CD4-positive, alpha-beta memory T cell (primary cell): ENCODE measurements at regions of chr10 and their contacts with region 1.

Region 1: DNA sequence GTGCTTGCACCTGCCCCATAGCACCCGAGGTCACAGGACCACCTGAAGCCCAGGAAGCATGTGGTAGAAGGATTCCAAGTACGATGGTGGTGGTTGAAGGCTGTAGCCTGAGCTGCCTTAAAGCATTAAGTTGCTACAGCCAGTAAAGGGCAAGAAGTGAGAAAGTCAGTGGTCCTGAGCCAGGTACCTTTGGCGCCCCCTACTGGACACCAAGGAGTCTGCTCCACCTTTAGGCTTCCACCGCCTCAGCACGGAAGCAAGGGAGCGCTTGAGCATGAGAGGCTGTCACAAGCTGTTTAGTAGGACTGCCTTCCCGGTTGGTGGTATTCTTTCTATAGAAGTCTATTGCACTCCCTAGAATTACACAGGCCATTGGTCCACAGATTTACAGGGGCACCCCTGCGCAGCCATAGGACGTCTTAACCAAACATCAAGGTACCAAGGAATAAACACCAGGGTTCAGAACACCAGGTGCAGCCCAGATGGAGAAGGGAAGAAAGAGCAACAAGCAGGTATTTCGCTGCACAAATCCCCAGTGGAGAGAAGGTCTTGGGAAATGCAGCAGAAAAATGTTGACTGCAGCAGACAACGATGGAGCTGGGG is 2.2 kb downstream of the CRTAC1 start:
- DNase-seq: peak; percentile 34 to 48 (median 45)
- H3K4me3 ChIP-seq: no peak overlapping the region
- H3K4me3 Mint-ChIP-seq: peak overlapping the region in 4 of 8 donors; percentile 4 to 73 (median 15)
- H3K27ac ChIP-seq: no peak overlapping the region
- H3K27ac Mint-ChIP-seq: no peak overlapping the region
- H3K4me1 ChIP-seq: no peaks in the 10 kb centered on the region
- H3K4me1 Mint-ChIP-seq: peaks cover 2 to 20% (median 7%) of the 10 kb centered on the region in 4 donors
- H3K27me3 ChIP-seq: peaks cover 13% of the 10 kb centered on the region
- H3K27me3 Mint-ChIP-seq: peaks cover 43 to 48% of the 10 kb centered on the region in 2 donors

Region 2: DNA sequence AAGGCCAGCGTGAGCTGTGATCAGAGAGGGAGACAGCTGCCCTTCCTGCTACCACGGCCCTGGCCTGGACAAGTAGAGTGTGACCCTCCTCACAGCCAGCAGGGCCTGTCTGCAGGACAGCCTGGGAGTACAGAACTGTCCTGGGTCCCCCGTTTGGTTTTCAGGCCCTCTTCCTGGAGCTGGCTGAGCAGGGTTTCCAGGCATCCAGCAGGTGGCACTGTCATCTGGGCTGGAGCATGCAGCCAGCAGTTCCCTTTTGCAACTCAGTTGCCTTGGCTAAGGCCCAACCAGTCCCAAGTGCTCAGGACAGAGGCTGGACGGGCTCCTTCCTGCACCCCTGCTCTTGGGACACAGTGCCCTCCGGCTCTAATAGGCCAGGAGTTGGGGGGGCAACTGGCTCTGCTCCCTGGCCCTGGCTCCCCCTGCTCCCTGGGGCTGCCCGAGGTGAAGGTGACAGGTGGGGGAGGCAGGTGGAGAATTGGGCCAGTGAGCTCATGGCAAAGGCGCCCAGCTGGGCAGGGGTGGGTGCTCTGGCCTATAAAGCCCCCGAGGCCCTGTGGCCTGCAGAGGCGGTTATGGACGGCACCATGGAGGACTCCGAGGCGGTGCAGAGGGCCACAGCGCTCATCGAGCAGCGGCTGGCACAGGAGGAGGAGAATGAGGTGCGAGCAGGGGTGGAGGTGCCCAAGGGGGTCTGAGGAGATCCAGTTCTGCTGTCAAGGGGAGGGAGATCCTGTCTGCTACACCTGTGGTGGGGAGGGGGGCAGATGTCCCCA is 455.9 kb before region 1 on chr10 and contains the start of gene ANKRD2:
- CTCF ChIA-PET with region 1: no interaction called
- POLR2A ChIA-PET with region 1: no interaction called
- intact Hi-C with region 1: no loop called
- DNase-seq: peak in 4 of 5 donors; percentile 21 to 31 (median 22)
- H3K4me3 ChIP-seq: no peak within 1 kb of the TSS
- H3K4me3 Mint-ChIP-seq: no peak within 1 kb of the TSS
- H3K27ac ChIP-seq: no peak within 1 kb of the TSS
- H3K27ac Mint-ChIP-seq: no peak within 1 kb of the TSS
- H3K4me1 ChIP-seq: no peaks in the 10 kb centered on the region
- H3K4me1 Mint-ChIP-seq: no peaks in the 10 kb centered on the region
- H3K27me3 ChIP-seq: no peaks in the 10 kb centered on the region
- H3K27me3 Mint-ChIP-seq: no peaks in the 10 kb centered on the region
- total RNA-seq, gene ANKRD2: not detected

Region 3: DNA sequence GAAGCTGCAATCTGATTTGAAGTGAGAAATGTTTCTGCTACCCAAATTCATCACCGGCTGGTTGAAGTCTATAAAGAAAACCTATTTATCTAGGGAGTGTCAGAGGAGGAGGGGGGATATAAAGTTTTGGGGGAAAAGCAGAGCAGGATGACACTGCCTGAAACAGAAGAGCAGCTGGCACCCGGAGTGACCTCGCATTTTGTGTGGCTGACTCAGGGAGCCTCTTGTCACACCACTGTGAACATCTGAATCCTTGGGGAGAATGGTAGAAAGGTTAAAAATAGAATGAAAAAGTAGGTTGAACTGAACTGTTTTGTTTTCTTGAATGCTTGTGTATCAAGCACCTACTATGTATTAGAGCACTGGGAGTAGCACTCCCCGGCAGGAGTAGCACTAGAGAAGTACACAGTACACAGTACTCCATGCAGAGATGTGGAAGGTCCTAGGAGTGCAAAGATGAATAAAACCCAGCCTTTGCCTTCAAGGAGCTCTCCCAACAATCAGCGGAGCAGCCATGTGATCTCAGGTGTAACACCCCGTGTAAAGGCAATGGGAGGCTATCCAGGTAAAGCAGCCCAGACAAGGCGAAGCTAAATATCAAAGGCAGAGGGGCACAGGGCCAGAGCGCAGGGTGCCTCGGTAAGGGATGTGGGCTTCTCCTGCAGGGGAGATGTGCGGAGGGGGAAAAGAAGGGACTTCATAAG is 11.3 kb before region 1 on chr10:
- CTCF ChIA-PET with region 1: interaction called, 26 read pairs
- POLR2A ChIA-PET with region 1: no interaction called
- intact Hi-C with region 1: no loop called
- DNase-seq: no peak
- H3K4me3 ChIP-seq: no peak overlapping the region
- H3K4me3 Mint-ChIP-seq: no peak overlapping the region
- H3K27ac ChIP-seq: no peak overlapping the region
- H3K27ac Mint-ChIP-seq: no peak overlapping the region
- H3K4me1 ChIP-seq: no peaks in the 10 kb centered on the region
- H3K4me1 Mint-ChIP-seq: no peaks in the 10 kb centered on the region
- H3K27me3 ChIP-seq: no peaks in the 10 kb centered on the region
- H3K27me3 Mint-ChIP-seq: peaks cover 10 to 22% of the 10 kb centered on the region in 2 donors

Region 4: DNA sequence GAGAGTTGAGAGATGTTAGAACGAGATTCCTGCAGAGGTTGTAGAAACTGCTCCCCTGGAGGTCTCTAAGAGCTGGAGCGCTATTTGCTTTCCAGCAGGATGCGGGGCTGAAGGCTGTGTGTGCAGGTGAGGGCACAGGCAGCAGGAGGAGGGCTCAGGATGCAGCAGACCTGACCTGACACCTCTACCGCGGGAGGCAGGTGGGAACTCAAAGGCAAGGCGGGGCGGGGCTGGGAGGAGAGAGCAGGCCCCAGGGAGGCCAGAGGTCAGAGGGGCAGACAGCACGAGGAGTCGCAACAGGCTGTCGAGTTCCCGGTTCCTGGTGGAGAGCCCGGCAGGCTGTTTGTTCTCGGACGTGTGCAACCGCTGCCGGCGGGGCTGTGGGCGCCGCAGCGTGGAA is 10.0 kb after region 1 on chr10:
- CTCF ChIA-PET with region 1: interaction called, 34 read pairs
- POLR2A ChIA-PET with region 1: no interaction called
- intact Hi-C with region 1: no loop called
- DNase-seq: no peak
- H3K4me3 ChIP-seq: no peak overlapping the region
- H3K4me3 Mint-ChIP-seq: no peak overlapping the region
- H3K27ac ChIP-seq: no peak overlapping the region
- H3K27ac Mint-ChIP-seq: no peak overlapping the region
- H3K4me1 ChIP-seq: no peaks in the 10 kb centered on the region
- H3K4me1 Mint-ChIP-seq: peaks cover 0 to 3% (median 0%) of the 10 kb centered on the region in 4 donors
- H3K27me3 ChIP-seq: peaks cover 19% of the 10 kb centered on the region
- H3K27me3 Mint-ChIP-seq: peaks cover 50 to 70% of the 10 kb centered on the region in 2 donors